ENCODE measurements at regions of chr6 and their contacts with region 1.

Region 1: DNA sequence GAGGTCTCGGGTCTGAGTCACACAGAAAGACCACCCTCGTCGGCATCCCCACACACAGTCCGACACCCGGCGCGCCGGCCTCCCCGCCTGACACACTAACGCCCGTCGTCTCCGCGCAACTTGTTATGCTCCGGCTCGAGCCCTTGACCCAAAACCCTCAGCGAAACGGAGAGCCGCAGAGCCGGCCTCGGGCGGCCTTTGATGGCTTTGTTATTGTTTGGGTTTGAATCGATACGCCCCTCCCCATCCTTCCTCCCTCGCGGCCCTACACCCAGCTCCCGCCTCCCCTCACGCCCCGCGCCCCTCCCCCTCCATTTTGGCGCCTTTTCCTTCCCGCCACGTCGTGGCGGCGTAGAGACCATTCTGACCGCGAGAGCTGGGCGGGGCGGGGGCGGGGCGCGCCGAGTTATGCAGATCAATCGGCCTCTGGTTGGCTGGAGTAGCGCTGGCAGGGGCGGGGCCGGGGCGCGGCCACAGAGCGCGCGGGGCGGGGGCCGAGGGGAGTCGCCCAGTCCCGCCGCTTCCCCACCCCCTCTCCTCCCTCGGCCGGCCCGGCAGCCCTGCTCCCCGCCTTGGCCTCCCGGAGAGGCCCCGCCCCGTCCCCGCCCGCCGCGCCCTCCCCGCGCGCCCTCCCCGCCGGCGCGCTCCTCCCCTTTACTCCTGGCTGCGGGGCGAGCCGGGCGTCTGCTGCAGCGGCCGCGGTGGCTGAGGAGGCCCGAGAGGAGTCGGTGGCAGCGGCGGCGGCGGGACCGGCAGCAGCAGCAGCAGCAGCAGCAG is at the start of gene PIM1:
- DNase-seq: peak; percentile 98 to 100 (median 99)
- ATAC-seq: peak; percentile 83
- H3K4me3 ChIP-seq: peak within 1 kb of the TSS; percentile 87 to 97
- H3K4me3 Mint-ChIP-seq: peak within 1 kb of the TSS; percentile 92
- H3K27ac ChIP-seq: peak within 1 kb of the TSS; percentile 74 to 78
- H3K27ac Mint-ChIP-seq: peak within 1 kb of the TSS; percentile 88
- H3K4me1 ChIP-seq: peaks cover 23% of the 10 kb centered on the region
- H3K4me1 Mint-ChIP-seq: peaks cover 41% of the 10 kb centered on the region
- H3K27me3 ChIP-seq: no peaks in the 10 kb centered on the region
- H3K27me3 Mint-ChIP-seq: no peaks in the 10 kb centered on the region
- CTCF ChIP-seq: no peak
- total RNA-seq, gene PIM1: 125 TPM

Region 2: GRCh38 chr6:36594029-36594815 is 575.5 kb before region 1 on chr6 and contains the start of gene SRSF3:
- CTCF ChIA-PET with region 1: no interaction called
- POLR2A ChIA-PET with region 1: no interaction called
- intact Hi-C with region 1: loop called in 1 of 2 experiments (anchors 5 kb)
- DNase-seq: peak; percentile 90 to 99 (median 94)
- ATAC-seq: peak; percentile 86
- H3K4me3 ChIP-seq: peak within 1 kb of the TSS; percentile 72 to 74
- H3K4me3 Mint-ChIP-seq: peak within 1 kb of the TSS; percentile 97
- H3K27ac ChIP-seq: peak within 1 kb of the TSS; percentile 93 to 95
- H3K27ac Mint-ChIP-seq: peak within 1 kb of the TSS; percentile 99
- H3K4me1 ChIP-seq: peaks cover 42% of the 10 kb centered on the region
- H3K4me1 Mint-ChIP-seq: peaks cover 45% of the 10 kb centered on the region
- H3K27me3 ChIP-seq: no peaks in the 10 kb centered on the region
- H3K27me3 Mint-ChIP-seq: no peaks in the 10 kb centered on the region
- CTCF ChIP-seq: no peak
- total RNA-seq, gene SRSF3: 620 to 627 TPM

Region 3: GRCh38 chr6:36885461-36886401 is 284.0 kb before region 1 on chr6 and contains the start of gene C6orf89:
- CTCF ChIA-PET with region 1: interaction called, 19 read pairs
- POLR2A ChIA-PET with region 1: interaction called, 3 read pairs
- intact Hi-C with region 1: loop called (anchors 1 kb)
- DNase-seq: peak; percentile 91 to 99 (median 97)
- ATAC-seq: peak; percentile 98
- H3K4me3 ChIP-seq: peak within 1 kb of the TSS; percentile 75 to 78
- H3K4me3 Mint-ChIP-seq: peak within 1 kb of the TSS; percentile 91
- H3K27ac ChIP-seq: peak within 1 kb of the TSS; percentile 63 to 91
- H3K27ac Mint-ChIP-seq: peak within 1 kb of the TSS; percentile 94
- H3K4me1 ChIP-seq: peaks cover 14% of the 10 kb centered on the region
- H3K4me1 Mint-ChIP-seq: peaks cover 38% of the 10 kb centered on the region
- H3K27me3 ChIP-seq: no peaks in the 10 kb centered on the region
- H3K27me3 Mint-ChIP-seq: no peaks in the 10 kb centered on the region
- CTCF ChIP-seq: peak; percentile 81
- total RNA-seq, gene C6orf89: 22.2 TPM

Region 4: GRCh38 chr6:37005061-37005810 is 164.4 kb before region 1 on chr6 and contains the start of gene FGD2:
- CTCF ChIA-PET with region 1: no interaction called
- POLR2A ChIA-PET with region 1: no interaction called
- intact Hi-C with region 1: no loop called
- DNase-seq: peak in 1 of 9 experiments; percentile 35
- ATAC-seq: no peak
- H3K4me3 ChIP-seq: peak within 1 kb of the TSS in 1 of 2 experiments; percentile 12
- H3K4me3 Mint-ChIP-seq: peak within 1 kb of the TSS; percentile 54
- H3K27ac ChIP-seq: peak within 1 kb of the TSS in 1 of 2 experiments; percentile 12
- H3K27ac Mint-ChIP-seq: peak within 1 kb of the TSS; percentile 2
- H3K4me1 ChIP-seq: peaks cover 13% of the 10 kb centered on the region
- H3K4me1 Mint-ChIP-seq: peaks cover 15% of the 10 kb centered on the region
- H3K27me3 ChIP-seq: no peaks in the 10 kb centered on the region
- H3K27me3 Mint-ChIP-seq: no peaks in the 10 kb centered on the region
- CTCF ChIP-seq: no peak
- total RNA-seq, gene FGD2: 0.68 to 0.83 TPM

Region 5: DNA sequence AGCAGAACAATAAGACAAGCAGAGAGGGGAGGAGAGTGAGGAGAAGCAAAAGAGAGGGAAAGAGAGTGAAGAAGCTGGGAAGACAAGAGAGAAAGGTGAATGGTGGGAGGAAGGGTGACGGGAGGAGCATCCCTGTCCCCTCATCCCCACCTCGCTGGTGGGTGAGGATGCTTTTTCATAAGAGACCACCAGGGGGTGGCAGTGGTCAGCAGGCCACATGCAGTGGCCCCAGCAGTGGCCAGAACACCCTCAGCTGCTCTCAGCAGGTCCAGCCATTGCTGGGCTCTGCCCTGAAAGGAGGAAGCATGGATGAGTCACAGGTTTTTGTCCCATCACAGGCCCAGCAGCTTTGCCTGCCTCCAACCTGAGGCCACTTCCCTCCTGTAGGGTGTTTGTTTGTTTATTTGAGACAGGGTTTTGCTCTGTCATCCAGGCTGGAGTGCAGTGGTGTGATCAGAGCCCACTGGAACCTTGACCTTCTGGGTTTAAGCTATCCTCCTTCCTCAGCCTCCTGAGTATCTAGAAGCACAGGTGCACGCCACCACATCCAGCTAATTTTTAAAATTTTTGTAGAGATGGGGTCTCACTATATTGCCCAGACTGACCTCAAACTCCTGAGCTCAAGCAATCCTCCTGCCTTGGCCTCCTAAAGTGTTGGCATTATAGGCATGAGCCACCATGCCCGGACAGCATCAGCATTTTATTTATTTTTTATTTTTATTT is 140.3 kb before region 1 on chr6:
- CTCF ChIA-PET with region 1: interaction called, 396 read pairs
- POLR2A ChIA-PET with region 1: interaction called, 20 read pairs
- intact Hi-C with region 1: loop called (anchors 1 kb)
- DNase-seq: peak in 7 of 9 experiments; percentile 15 to 72 (median 49)
- ATAC-seq: peak; percentile 67
- H3K4me3 ChIP-seq: no peak overlapping the region
- H3K4me3 Mint-ChIP-seq: no peak overlapping the region
- H3K27ac ChIP-seq: no peak overlapping the region
- H3K27ac Mint-ChIP-seq: no peak overlapping the region
- H3K4me1 ChIP-seq: peaks cover 7% of the 10 kb centered on the region
- H3K4me1 Mint-ChIP-seq: peaks cover 10% of the 10 kb centered on the region
- H3K27me3 ChIP-seq: no peaks in the 10 kb centered on the region
- H3K27me3 Mint-ChIP-seq: no peaks in the 10 kb centered on the region
- CTCF ChIP-seq: peak; percentile 59

Region 6: DNA sequence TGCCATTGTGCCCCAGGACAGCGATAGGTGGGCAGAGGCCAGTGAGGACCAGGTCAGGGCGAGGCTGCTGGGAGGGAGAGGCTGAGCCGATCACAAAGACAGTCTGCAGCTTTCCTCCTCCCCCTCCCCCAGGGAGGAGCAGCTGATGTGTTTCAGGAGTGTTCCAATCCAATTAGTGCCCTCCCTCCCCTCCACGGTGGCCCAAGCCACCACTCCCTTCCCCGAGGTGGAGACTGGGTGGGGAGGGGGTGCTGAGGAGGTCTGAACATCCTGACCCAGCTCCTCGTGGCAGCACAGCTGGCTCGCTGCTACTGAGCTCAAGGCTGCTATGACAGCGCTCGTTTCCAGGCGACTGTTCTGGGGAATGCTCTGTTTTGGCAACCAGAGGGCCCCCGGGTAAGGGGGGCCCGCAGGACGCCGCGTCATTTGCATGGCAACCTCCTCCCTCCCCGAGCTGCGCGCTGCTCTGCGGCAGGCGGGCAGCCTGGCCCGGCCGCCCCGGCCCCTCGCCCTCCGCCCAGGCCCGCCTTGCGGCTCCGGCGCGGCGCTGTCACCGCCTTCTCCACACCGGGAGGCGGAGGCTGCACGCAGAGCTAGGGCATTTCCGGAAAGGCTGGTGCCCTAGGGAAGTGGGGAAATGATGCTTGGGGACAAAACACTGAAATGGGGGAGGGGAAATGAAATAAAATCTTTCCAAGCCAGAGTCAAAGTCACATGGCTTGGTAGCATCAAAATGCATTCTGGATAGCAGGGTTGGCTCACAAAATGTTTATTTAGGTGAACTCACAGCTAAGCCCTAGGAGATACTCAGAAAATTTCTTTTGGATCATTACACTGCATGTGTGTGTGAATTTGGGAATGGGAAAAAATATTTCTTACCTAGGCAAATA is 67.2 kb before region 1 on chr6:
- CTCF ChIA-PET with region 1: interaction called, 5 read pairs
- POLR2A ChIA-PET with region 1: interaction called, 4 read pairs
- intact Hi-C with region 1: loop called (anchors 1 kb)
- DNase-seq: peak; percentile 51 to 91 (median 74)
- ATAC-seq: peak; percentile 90
- H3K4me3 ChIP-seq: peak overlapping the region; percentile 36 to 45
- H3K4me3 Mint-ChIP-seq: peak overlapping the region; percentile 78
- H3K27ac ChIP-seq: peak overlapping the region; percentile 48 to 66
- H3K27ac Mint-ChIP-seq: peak overlapping the region; percentile 75
- H3K4me1 ChIP-seq: peaks cover 15% of the 10 kb centered on the region
- H3K4me1 Mint-ChIP-seq: peaks cover 25% of the 10 kb centered on the region
- H3K27me3 ChIP-seq: no peaks in the 10 kb centered on the region
- H3K27me3 Mint-ChIP-seq: no peaks in the 10 kb centered on the region
- CTCF ChIP-seq: no peak

Region 7: DNA sequence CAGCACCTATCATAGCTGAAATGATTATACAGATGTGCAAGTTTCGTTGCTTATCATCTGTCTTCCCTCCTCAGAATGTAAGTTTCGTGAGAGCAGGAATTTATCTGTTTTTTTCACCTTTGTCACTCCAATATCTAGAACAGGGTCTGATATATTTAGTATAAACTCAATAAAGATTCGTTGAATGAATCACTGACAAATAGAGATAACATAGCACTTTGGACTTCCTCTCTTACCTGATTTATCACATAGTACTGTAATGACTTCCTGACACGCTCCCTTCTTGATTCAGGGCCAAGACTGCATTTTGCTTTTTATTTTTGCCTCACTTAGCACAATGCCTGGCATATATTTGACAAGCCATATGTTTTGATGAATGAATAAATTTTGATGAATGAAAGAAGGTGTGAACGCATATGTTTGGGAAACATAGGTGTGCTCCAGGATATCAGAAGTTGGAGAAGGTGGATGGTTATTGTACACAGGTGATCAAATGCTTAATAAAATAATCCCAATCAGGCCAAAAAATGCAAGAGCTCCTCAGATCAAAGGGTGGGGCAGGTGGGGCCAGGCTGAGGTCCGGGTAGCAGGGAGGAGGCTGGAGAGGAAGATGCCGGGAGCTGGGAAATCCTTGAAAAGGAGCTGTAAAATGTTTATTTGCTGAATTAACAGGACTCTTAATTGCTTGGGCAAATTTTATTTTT is 33.3 kb after region 1 on chr6:
- CTCF ChIA-PET with region 1: interaction called, 225 read pairs
- POLR2A ChIA-PET with region 1: interaction called, 34 read pairs
- intact Hi-C with region 1: loop called in 1 of 2 experiments (anchors 1 kb)
- DNase-seq: peak in 1 of 9 experiments; percentile 35
- ATAC-seq: peak; percentile 71
- H3K4me3 ChIP-seq: no peak overlapping the region
- H3K4me3 Mint-ChIP-seq: peak overlapping the region; percentile 13
- H3K27ac ChIP-seq: peak overlapping the region in 1 of 2 experiments; percentile 47
- H3K27ac Mint-ChIP-seq: peak overlapping the region; percentile 83
- H3K4me1 ChIP-seq: peaks cover 45% of the 10 kb centered on the region
- H3K4me1 Mint-ChIP-seq: peaks cover 46% of the 10 kb centered on the region
- H3K27me3 ChIP-seq: no peaks in the 10 kb centered on the region
- H3K27me3 Mint-ChIP-seq: no peaks in the 10 kb centered on the region
- CTCF ChIP-seq: no peak

Region 8: DNA sequence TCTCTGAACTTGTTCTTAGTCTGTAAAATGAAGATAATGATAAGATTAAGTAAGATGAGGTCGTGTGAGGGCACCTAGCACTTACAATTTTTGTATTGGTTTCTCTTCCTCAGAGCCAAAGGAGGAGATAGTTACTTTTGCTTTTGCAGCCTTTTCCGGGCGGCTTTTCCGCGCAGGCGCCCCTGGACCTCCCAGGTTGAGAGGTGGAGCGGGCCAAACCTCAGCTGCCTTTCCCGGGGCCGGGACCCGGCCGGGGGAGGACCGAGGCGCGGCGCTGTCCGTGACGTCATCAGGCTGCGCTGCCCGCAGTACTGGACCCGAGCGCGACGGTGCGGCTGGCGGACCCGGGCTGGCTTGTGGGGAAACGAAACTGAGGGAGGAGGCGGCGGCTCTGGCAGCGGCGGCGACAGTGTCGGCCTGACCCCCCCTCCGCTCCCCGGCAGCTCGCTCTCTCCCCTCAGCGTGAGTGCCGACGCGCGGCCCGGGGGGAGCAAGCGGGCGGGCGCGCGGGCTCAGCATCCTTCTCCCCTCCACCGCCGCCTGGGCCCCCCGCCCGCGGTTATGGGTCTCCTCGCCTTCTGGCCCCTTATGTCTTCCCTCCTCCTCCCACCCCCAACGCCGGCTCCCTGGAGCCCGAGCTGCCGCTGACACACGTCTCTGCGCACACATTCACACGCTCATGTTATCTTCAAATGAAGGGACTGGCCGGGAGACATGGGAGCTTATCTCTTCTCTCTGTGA is 263.4 kb after region 1 on chr6 and contains the start of gene CMTR1:
- CTCF ChIA-PET with region 1: no interaction called
- POLR2A ChIA-PET with region 1: no interaction called
- intact Hi-C with region 1: loop called in 1 of 2 experiments (anchors 2 kb)
- DNase-seq: peak; percentile 93 to 98 (median 97)
- ATAC-seq: peak; percentile 85
- H3K4me3 ChIP-seq: peak within 1 kb of the TSS; percentile 71 to 79
- H3K4me3 Mint-ChIP-seq: peak within 1 kb of the TSS; percentile 94
- H3K27ac ChIP-seq: peak within 1 kb of the TSS; percentile 84 to 90
- H3K27ac Mint-ChIP-seq: peak within 1 kb of the TSS; percentile 97
- H3K4me1 ChIP-seq: peaks cover 9% of the 10 kb centered on the region
- H3K4me1 Mint-ChIP-seq: peaks cover 41% of the 10 kb centered on the region
- H3K27me3 ChIP-seq: no peaks in the 10 kb centered on the region
- H3K27me3 Mint-ChIP-seq: peaks cover 7% of the 10 kb centered on the region
- CTCF ChIP-seq: no peak
- total RNA-seq, gene CMTR1: 74.8 to 79.5 TPM

Measured in CD8-positive, alpha-beta T cell (primary cell).